SK-N-SH (cell line): ENCODE measurements at regions of chr14 and their contacts with region 1.

Region 1: DNA sequence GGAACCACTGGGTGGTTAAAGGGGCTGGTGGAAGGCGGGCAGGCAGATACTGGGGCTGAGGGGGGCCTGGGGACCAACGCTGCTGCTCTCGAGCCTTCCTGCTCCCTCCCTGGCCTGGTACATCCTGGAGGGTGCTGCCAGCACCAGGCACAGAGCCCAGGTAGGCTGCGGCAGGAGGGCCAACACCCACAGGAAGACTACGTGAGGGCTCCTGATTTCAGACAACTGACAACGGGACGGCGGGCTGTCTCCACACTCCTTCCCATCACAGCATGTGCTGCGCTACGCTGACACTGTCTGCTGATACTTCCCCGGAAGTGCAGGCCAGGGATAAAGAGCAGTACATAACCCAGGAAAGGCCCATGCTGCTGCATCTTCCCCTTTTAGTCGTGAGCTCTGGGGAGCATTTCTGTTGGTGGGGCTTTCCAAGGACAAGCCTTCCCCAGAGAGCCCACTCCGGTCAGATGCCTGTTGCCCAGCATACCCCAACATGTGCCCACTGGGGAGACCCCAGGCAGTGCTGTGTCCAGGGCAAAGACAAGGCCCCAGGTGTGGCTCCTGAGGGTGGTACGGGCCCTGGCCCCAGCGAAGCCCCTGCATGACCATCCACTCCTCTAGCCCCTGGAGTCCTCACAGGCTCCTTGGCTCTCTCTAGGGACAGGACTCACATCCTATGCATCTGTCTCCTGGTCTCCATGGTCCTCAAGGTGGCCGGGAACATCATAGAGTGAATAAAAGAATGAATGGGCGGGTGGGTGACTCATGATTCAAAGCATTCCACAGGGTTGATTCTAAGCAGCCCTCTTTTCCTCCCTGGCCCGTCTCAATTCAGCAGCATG is 38.0 kb downstream of the CHGA start:
- DNase-seq: no peak
- H3K4me3 ChIP-seq: no peak overlapping the region
- H3K27ac ChIP-seq: peak overlapping the region in 1 of 2 experiments; percentile 97; a peak in 2 of 4 replicates
- H3K4me1 ChIP-seq: peaks cover 3 to 83% of the 10 kb centered on the region in 2 experiments; a peak in 3 of 4 replicates
- H3K27me3 ChIP-seq: no peaks in the 10 kb centered on the region
- CTCF ChIP-seq: no peak
- EP300 ChIP-seq: no peak
- RAD21 ChIP-seq: no peak

Region 2: DNA sequence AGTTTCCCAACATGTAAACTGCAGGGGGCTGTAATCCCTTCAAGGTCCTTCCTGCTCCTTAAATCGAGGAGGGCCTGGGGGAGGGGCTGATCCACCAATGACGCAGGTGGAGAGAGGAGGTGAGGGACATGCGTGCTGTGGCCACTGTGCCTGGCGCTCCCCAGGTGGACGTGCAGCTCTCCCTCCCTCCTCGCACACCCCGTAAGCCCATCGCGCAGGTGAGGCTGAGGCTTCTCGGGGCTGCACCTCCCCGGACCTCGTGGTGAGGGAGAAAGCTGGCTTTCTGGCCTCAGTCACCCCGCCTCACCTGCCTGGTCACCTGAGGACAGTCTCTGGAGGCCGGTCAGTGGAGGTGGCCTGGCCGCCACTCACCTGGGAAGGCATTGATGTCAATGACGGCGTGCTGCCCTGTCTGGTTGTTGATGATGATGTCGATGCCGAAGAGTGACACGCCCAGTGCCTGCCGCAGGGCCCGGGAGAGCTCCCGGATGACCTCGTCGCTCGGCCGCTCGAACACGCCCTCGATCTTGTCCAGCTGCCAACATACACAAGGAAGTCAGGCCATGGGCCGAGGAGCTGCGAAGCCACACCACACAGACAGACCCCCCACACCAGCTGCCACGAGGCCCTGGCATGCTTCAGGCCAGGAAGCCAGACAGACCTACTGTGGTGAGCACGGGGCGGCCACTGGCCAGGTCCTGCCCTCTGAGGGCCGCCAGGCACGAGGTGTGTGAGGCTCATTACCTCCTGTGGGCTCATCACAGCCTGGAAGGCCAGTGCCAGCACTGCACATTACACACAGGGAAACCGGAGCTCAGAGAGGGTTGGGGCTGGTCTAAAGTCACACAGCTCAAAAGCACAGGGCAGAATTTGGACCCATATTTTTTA is 14.7 kb before region 1 on chr14:
- CTCF ChIA-PET with region 1: interaction called, 16 read pairs
- POLR2A ChIA-PET with region 1: interaction called, 10 read pairs
- DNase-seq: peak; percentile 62
- H3K4me3 ChIP-seq: no peak overlapping the region
- H3K27ac ChIP-seq: peak overlapping the region in 1 of 2 experiments; percentile 78; a peak in 2 of 4 replicates
- H3K4me1 ChIP-seq: peaks cover 0 to 34% of the 10 kb centered on the region in 2 experiments; a peak in 1 of 4 replicates
- H3K27me3 ChIP-seq: no peaks in the 10 kb centered on the region
- CTCF ChIP-seq: no peak
- EP300 ChIP-seq: no peak
- RAD21 ChIP-seq: no peak

Region 3: GRCh38 chr14:92973261-92973797 is 12.4 kb after region 1 on chr14:
- CTCF ChIA-PET with region 1: interaction called, 6 read pairs
- POLR2A ChIA-PET with region 1: interaction called, 10 read pairs
- DNase-seq: peak; percentile 74
- H3K4me3 ChIP-seq: no peak overlapping the region; a peak in 1 of 4 replicates
- H3K27ac ChIP-seq: peak overlapping the region in 1 of 2 experiments; percentile 83; a peak in 1 of 4 replicates
- H3K4me1 ChIP-seq: peaks cover 0 to 45% of the 10 kb centered on the region in 2 experiments; a peak in 1 of 4 replicates
- H3K27me3 ChIP-seq: no peaks in the 10 kb centered on the region
- CTCF ChIP-seq: peak; percentile 55
- EP300 ChIP-seq: no peak
- RAD21 ChIP-seq: peak; percentile 76

Region 4: DNA sequence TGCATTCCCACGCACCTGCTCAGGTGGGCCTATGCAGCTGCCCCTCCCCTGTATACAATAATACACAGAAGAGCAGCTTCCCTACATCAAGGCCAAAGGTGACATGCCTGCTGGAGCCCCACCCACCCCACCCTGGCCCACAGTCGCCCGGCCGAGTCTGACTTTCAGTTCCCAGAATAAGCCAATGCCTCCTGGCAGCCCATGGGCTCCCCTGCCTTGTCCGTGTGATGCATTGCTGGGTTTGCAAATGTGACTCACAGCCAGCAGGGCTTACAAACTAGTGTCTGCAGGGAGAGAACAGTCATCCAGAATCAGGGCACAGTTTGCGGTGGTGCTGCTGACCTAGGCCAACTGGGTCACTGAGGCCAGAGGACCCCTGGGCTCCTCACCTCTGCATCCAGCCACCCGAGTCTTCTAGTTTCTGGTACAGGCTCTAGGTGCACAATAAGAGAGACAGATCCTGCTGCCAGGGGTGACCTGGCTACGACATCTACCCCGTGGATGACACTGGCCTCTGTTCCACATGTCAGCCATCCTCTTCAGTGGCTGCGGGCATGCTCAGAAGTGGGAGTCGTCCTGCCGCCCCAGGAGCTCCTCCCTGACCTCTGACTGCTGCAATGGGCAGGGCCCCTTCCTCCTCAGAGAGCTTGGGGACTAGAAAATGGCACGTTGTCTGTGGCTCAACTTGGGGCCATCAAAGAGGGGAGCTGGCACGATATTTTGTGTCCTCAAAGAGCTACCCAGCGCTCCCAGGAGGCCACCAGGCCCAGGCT is 46.5 kb after region 1 on chr14:
- CTCF ChIA-PET with region 1: interaction called, 20 read pairs
- POLR2A ChIA-PET with region 1: interaction called, 7 read pairs
- DNase-seq: no peak
- H3K4me3 ChIP-seq: no peak overlapping the region
- H3K27ac ChIP-seq: peak overlapping the region in 1 of 2 experiments; percentile 98; a peak in 2 of 4 replicates
- H3K4me1 ChIP-seq: peaks cover 19 to 100% of the 10 kb centered on the region in 2 experiments
- H3K27me3 ChIP-seq: no peaks in the 10 kb centered on the region
- CTCF ChIP-seq: no peak
- EP300 ChIP-seq: no peak
- RAD21 ChIP-seq: no peak